IMR-90 (cell line): ENCODE measurements at regions of chr22 and their contacts with region 1.

Region 1: GRCh38 chr22:43945632-43946383 is 9.4 kb upstream of the SAMM50 start:
- DNase-seq: peak; percentile 59
- ATAC-seq: peak; percentile 100
- H3K4me3 ChIP-seq: no peak overlapping the region
- H3K27ac ChIP-seq: no peak overlapping the region
- H3K4me1 ChIP-seq: no peaks in the 10 kb centered on the region
- H3K27me3 ChIP-seq: no peaks in the 10 kb centered on the region
- CTCF ChIP-seq: peak; percentile 79
- POLR2A ChIP-seq: no peak
- RAD21 ChIP-seq: peak; percentile 72

Region 2: GRCh38 chr22:43745783-43746356 is 199.9 kb before region 1 on chr22:
- CTCF ChIA-PET with region 1: no interaction called
- POLR2A ChIA-PET with region 1: interaction called, 10 read pairs
- dilution Hi-C with region 1: no loop called
- in situ Hi-C with region 1: no loop called
- intact Hi-C with region 1: no loop called
- DNase-seq: no peak
- ATAC-seq: no peak
- H3K4me3 ChIP-seq: no peak overlapping the region
- H3K27ac ChIP-seq: no peak overlapping the region
- H3K4me1 ChIP-seq: no peaks in the 10 kb centered on the region
- H3K27me3 ChIP-seq: peaks cover 26% of the 10 kb centered on the region
- CTCF ChIP-seq: no peak
- POLR2A ChIP-seq: no peak
- RAD21 ChIP-seq: no peak

Region 3: DNA sequence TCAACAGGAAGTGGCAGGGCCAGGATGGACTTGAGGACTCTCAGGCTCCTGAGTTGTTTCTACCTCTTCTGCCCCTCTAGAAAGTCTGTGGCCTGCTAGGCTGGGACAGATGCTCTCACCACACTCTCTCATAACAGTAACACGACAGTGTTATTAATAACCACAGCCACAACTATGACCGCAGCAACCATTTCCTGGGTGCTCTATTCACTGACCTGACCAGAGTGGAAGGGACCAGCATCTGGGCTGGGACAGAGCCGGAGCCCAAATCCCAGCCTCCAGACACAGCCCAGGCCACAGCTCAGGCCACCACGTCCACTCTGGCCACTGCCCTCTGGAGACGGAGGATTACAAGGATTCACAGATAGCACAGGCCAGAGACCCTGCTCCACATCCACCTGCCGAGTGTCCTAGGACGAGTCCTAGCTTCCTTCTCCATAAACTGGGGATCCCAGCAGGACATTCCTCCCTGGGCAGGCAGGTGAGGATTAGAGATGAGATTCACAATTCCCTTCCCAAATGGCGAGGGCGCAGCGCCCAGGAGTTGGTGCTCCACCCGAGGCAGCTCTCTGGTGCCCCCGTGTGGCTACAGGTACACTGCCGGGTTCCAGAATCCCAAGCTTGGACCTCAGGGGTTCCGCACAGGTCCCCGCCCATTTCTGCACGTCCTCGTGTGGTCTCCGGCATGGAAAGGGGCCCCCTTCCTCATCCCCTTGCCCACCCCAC is 61.0 kb before region 1 on chr22:
- CTCF ChIA-PET with region 1: interaction called, 7 read pairs
- POLR2A ChIA-PET with region 1: no interaction called
- dilution Hi-C with region 1: no loop called
- in situ Hi-C with region 1: no loop called
- intact Hi-C with region 1: loop called (anchors 5 kb)
- DNase-seq: peak; percentile 31
- ATAC-seq: peak; percentile 82
- H3K4me3 ChIP-seq: no peak overlapping the region
- H3K27ac ChIP-seq: no peak overlapping the region
- H3K4me1 ChIP-seq: no peaks in the 10 kb centered on the region
- H3K27me3 ChIP-seq: peaks cover 5% of the 10 kb centered on the region; the same call in 1 of the 2 replicates
- CTCF ChIP-seq: peak; percentile 73
- POLR2A ChIP-seq: no peak
- RAD21 ChIP-seq: peak; percentile 72

Region 4: DNA sequence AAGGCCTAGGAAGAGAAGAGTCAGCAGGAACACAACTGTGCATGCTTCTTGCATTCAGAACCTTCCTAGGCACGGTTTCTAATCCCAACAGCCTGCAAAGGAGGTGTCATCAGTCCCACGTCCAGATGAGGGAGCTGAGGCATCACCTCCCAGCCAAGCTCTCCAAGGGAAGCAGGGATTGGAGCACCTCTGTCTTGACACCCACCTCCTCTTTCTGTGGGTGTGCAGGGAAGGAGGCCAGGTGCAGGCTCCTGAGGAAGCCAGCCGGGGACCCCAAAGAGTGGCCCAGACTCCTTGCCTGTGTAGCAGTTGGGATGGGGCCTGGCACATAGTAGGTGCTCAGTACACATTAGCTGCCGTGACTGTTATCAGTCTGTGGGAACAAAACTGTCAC is 56.0 kb before region 1 on chr22:
- CTCF ChIA-PET with region 1: interaction called, 7 read pairs
- POLR2A ChIA-PET with region 1: no interaction called
- dilution Hi-C with region 1: no loop called
- in situ Hi-C with region 1: no loop called
- intact Hi-C with region 1: loop called (anchors 2 kb)
- DNase-seq: peak; percentile 46
- ATAC-seq: peak; percentile 53
- H3K4me3 ChIP-seq: no peak overlapping the region
- H3K27ac ChIP-seq: no peak overlapping the region
- H3K4me1 ChIP-seq: no peaks in the 10 kb centered on the region; the same call in 1 of the 2 replicates
- H3K27me3 ChIP-seq: peaks cover 33% of the 10 kb centered on the region
- CTCF ChIP-seq: peak; percentile 51
- POLR2A ChIP-seq: no peak
- RAD21 ChIP-seq: peak; percentile 56

Region 5: DNA sequence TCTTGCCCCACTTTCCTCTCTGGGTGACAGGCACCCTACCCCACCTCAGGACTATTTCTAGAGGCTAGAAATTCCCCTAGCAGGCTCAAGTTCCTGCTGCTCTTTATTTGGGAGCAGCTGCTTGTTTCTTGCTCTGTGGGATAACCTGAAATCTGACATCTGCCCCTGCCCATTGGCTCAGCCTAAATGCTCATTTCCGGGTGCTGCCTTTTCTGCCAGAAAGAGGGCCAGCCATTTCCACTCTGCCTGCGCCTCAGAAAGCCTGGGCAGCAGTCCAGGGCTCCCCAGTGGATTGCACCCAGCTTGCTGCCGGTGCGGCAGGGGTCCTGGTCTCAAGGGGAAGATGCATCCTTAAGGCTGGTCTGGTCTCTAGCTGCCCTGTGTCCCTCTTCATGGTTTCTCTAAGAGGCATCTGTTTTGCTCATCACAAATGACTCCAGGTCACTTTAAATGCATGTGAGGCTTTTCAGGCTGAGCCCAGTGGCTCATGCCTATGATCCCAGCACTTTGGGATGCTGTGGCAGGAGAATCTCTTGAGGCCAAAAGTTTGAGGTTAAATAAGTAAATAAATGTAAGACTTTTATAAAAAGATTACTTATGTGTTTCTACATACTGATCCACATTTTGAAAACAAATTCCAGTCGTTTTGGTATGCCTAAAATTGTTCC is 43.7 kb before region 1 on chr22:
- CTCF ChIA-PET with region 1: interaction called, 6 read pairs
- POLR2A ChIA-PET with region 1: no interaction called
- dilution Hi-C with region 1: no loop called
- in situ Hi-C with region 1: no loop called
- intact Hi-C with region 1: loop called (anchors 5 kb)
- DNase-seq: peak; percentile 97
- ATAC-seq: peak; percentile 86
- H3K4me3 ChIP-seq: no peak overlapping the region
- H3K27ac ChIP-seq: peak overlapping the region; percentile 89
- H3K4me1 ChIP-seq: peaks cover 41% of the 10 kb centered on the region
- H3K27me3 ChIP-seq: no peaks in the 10 kb centered on the region
- CTCF ChIP-seq: no peak
- POLR2A ChIP-seq: no peak
- RAD21 ChIP-seq: no peak

Region 6: DNA sequence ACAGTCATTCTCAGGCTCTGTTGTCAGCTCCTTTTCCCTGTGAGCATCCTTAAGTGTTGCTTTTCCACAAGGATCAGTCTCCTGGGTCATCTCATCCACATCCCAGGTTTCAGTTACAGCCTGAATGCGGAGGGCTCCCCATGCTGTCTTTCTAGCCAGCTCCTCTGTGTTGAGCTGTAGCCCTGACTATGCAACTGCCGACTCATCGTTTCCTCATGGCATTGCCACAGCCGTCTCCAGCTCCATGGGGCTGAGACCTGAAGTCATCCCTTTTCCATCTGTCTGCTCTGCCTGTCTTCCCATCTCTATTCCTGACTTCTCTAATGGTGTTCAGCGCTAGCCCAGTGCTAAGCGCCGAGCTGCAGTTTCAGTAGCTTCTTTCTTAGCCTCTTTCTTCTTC is 21.3 kb after region 1 on chr22:
- CTCF ChIA-PET with region 1: no interaction called
- POLR2A ChIA-PET with region 1: interaction called, 10 read pairs
- dilution Hi-C with region 1: no loop called
- in situ Hi-C with region 1: no loop called
- intact Hi-C with region 1: no loop called
- DNase-seq: no peak
- ATAC-seq: no peak
- H3K4me3 ChIP-seq: no peak overlapping the region
- H3K27ac ChIP-seq: no peak overlapping the region
- H3K4me1 ChIP-seq: no peaks in the 10 kb centered on the region
- H3K27me3 ChIP-seq: no peaks in the 10 kb centered on the region
- CTCF ChIP-seq: no peak
- POLR2A ChIP-seq: no peak
- RAD21 ChIP-seq: no peak